ENCODE measurements at regions of chr1 and their contacts with region 1.

Region 1: GRCh38 chr1:232496175-232496574 is 133.8 kb downstream of the SIPA1L2 start:
- DNase-seq: no peak
- H3K4me3 ChIP-seq: no peak overlapping the region
- H3K27ac ChIP-seq: no peak overlapping the region
- H3K4me1 ChIP-seq: no peaks in the 10 kb centered on the region
- H3K27me3 ChIP-seq: no peaks in the 10 kb centered on the region
- CTCF ChIP-seq: no peak

Region 2: DNA sequence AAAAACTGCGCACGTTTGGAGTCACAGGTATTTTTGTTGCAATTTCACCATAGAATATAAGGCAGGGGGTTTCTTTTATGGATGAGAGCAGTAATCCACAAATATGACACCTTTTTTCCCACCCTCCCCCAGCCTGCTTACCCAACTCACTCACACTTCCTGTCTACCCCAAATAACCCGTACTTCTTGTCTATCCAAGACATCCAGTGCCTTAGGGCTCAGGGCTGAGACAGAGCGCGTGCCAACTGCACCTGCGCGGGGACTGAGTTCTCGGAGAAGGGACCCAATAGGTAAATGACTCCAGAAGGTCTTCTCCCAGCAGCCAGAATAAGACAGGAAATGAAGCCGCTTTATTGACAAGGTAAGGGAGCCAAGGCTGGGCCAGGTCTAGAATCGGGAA is 235.3 kb before region 1 on chr1:
- CTCF ChIA-PET with region 1: no interaction called
- POLR2A ChIA-PET with region 1: no interaction called
- intact Hi-C with region 1: no loop called
- DNase-seq: peak in 1 of 2 experiments; percentile 44
- H3K4me3 ChIP-seq: no peak overlapping the region
- H3K27ac ChIP-seq: no peak overlapping the region
- H3K4me1 ChIP-seq: no peaks in the 10 kb centered on the region; the same call in 1 of the 2 replicates
- H3K27me3 ChIP-seq: peaks cover 15% of the 10 kb centered on the region; the same call in 1 of the 2 replicates
- CTCF ChIP-seq: no peak

Region 3: DNA sequence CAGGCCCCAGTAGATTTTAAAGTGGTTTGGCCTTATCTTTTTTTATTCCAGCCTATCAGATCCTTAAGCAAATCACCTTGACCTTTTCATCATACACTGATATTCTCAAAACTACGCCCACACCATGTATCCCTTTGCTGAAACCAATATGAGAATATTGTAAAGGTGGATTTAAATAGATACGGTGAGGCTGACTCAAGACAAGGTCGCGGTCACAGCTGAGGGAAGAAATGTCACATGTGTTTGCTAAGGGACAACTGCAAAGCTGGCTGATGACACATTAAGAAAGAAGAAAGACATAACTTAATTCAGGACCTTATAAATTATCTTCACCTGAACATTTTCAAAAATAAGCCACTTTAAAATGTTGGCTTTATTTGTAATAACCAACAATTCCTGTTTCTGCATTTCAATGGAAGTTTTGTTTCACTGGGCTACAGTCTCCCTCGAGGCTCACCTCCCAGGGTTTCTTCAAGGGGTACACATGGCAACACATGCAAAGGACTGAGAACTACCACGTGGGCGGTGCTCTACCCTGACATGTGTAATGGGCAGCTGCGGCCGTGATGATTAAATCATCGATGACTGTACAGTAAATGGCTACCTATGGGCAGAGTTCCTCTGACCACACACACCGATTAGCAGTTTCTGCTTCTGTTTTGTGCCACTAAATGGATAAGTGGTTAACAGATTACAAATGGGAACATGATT is 55.7 kb before region 1 on chr1:
- CTCF ChIA-PET with region 1: no interaction called
- POLR2A ChIA-PET with region 1: no interaction called
- intact Hi-C with region 1: no loop called
- DNase-seq: no peak
- H3K4me3 ChIP-seq: no peak overlapping the region
- H3K27ac ChIP-seq: no peak overlapping the region
- H3K4me1 ChIP-seq: no peaks in the 10 kb centered on the region
- H3K27me3 ChIP-seq: no peaks in the 10 kb centered on the region
- CTCF ChIP-seq: no peak

Region 4: GRCh38 chr1:232508130-232508701 is 12.0 kb after region 1 on chr1:
- CTCF ChIA-PET with region 1: interaction called, 23 read pairs
- POLR2A ChIA-PET with region 1: no interaction called
- intact Hi-C with region 1: no loop called
- DNase-seq: no peak
- H3K4me3 ChIP-seq: no peak overlapping the region
- H3K27ac ChIP-seq: no peak overlapping the region
- H3K4me1 ChIP-seq: peaks cover 18% of the 10 kb centered on the region
- H3K27me3 ChIP-seq: 0 out of 2 replicates have a peak, but pooled peaks cover 3% of the 10 kb centered on the region
- CTCF ChIP-seq: no peak

Measured in PC-9 (cell line).